ENCODE measurements at regions of chr3 and their contacts with region 1.

Region 1: DNA sequence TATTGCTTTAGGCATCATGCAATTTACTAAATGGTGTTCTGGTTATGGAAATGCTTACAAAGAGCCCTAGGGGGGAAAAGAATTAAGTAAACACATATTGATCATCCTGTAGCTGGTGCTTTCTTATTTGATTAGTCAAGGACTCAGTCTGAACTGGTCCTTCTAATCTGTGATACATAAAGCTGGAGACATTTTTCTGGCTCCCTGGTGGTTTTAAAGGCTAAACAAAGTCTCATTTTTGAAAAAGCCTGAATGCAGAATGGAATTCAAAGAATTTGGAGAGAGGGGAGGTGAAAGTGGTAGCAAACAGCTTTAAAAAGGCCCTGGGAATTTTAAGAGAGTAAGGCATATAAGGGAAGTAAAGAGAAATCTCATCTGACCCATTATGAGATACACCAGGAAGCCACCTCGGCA is 149.7 kb downstream of the RBMS3 start:
- DNase-seq: no peak

Region 2: DNA sequence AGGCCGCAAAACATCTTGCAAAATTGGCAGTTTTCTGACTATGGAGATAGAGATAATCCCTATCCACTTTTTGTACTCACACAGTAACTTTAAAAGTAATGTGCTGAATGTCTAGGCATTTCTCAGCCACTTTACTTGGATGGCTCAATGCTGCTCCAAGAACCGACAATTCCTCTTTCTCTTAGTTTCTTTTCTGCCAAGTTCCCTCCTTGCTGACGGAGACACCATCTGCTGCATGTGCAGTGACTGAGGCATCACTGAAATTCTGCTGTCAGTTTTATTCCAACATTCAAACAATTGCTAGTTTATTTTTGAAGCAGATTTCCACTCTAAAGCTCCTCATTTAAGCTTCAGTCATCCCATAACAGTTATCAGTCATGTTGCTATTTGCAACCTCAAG is 265.7 kb before region 1 on chr3:
- intact Hi-C with region 1: no loop called
- DNase-seq: no peak

Region 3: DNA sequence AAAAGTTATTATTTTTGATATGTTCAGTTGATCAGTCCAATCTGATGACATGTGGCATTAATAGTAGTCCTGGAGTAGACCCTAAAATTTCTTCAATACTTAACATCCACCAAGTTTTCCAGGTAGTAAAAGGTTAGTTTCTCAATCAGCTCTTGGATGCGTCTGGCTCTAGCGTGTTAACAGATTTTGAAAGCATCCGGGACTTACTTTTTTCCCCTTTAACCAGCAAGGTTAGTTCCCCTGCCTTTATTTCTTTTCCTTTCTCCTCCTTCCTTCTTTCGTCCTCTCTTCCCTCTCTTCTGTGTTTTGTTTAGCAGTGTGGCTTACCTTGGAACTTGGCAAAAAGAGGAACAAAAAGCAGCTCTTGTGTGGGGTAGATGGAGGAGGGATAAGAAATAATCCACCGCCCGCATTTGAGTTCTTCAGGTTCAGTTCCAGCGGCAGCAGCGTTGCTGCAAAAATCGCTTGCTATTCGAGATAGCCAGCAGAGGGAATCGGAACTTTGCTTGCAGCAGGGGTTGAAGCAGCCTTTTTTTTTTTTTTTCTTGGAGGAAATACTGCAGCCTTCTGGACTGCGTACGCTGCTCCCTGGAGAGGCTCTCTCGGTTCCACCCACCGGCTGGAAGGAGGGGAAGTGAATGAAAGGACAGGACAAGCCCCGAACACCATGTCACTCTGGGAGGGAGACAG is 150.0 kb before region 1 on chr3 and contains the start of gene RBMS3:
- intact Hi-C with region 1: loop called in 1 of 2 experiments (anchors 10 kb)
- DNase-seq: peak; percentile 94
- total RNA-seq, gene RBMS3: 87.1 to 109 TPM

Region 4: DNA sequence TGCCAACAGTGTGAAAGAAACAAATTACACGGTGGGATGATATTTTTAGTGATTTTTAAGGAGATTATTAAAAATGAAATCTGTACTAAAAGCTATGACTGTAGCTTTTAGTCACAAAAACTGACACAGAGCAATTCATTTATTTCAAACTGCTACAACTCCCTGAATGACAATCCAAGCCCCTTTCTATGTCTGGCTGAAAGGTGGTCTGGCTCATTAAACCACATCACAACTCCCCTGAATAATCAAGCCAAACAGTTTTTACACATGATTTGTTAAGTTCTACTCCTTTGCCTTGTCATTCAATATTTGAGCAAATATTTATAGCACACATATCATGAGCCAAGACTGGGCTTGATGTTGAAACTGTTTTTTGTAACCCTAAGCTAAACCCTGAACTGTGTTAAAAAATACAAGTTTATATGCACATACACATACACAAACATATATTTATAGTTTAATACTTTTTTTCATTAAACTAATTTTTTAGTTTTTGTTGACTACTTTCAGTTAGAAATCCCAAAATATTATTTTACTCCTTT is 24.2 kb before region 1 on chr3:
- intact Hi-C with region 1: loop called in 1 of 2 experiments (anchors 2 kb)
- DNase-seq: no peak